Cardiac septum (tissue), 1 donor: ENCODE measurements at regions of chr16 and their contacts with region 1.

Region 1: DNA sequence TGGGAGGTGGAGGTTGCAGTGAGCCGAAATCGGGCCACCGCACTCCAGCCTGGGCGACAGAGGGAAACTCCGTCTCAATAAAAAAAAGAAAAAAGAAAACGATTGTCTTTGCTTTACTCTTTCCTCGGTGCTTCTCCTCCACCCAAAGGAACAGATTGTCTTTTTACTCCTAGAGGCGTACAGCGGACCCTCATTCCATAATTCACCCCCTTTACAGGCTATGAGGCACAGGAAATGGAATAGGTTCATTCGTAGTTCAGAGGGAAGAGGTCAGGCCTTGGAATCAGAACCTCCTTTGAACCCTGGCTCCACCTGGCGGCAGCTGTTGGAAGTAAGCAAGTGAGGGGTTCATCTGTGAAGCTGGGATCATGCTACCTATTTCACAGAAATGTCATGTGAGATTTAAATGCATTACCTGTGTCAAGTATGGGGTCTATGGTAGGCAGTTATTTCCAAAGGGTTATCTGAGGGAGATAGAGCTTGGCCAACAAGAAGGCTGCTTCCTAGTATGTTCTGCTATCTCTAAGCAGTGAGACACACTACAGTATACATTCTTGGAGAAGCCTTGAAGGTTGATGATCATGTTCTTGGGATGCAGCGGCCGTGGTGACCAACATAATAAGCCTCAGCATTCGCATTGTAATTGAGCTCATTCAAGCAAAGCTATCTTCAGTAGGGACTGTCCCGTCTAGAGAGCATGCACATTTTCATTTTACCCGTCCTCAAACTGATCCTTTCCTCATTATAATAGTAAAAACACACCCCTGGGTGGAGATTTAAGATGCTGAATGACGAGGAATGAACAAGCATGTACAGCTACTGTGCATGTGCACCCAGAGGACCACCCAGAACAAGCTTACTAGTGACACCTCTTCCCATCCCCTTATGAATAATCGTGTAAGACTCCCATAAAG is 18.7 kb upstream of the ZNF689 start:
- DNase-seq: peak; percentile 93

Region 2: DNA sequence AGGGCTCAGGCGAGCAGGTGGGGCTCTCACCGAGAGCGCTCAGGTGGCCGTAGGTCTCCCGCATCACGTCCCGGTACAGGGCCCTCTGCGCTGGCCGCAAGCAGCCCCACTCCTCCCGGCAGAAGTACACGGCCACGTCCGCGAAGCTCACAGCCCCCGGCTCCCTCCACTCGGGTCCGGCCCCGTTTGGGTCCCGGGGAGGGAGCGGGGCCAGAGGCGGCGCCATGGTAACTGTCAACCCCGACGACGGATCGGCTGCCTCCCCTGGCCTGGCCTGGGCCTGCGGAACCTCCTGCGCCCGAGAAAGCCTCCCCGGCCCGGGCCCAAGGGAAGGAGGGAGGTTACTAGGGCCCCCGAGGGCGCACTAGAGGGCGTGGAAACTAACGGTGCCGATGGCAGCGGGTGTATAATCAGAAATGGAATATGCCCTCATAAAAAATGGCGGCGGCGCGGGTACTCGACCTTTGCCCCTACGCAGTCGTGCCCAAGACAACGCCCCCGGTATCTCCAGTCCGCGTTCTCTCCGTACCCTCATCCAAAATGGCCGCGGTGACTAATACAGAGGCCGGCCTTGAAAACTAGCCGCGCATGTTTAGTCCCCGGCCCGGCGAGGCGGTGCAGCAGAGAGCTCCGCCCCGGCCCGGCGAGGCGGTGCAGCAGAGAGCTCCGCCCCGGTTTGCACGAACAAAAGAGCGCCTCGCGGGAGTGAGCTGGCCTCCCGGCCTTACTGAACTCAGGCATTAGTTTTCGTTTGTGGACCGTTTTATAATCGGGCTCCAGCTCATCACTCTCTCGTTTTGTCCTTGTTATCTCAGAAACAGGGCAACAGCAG is 70.7 kb before region 1 on chr16 and contains the start of gene ZNF764:
- intact Hi-C with region 1: loop called (anchors 2 kb)
- DNase-seq: peak; percentile 100
- total RNA-seq, gene ZNF764: 11.4 TPM

Region 3: DNA sequence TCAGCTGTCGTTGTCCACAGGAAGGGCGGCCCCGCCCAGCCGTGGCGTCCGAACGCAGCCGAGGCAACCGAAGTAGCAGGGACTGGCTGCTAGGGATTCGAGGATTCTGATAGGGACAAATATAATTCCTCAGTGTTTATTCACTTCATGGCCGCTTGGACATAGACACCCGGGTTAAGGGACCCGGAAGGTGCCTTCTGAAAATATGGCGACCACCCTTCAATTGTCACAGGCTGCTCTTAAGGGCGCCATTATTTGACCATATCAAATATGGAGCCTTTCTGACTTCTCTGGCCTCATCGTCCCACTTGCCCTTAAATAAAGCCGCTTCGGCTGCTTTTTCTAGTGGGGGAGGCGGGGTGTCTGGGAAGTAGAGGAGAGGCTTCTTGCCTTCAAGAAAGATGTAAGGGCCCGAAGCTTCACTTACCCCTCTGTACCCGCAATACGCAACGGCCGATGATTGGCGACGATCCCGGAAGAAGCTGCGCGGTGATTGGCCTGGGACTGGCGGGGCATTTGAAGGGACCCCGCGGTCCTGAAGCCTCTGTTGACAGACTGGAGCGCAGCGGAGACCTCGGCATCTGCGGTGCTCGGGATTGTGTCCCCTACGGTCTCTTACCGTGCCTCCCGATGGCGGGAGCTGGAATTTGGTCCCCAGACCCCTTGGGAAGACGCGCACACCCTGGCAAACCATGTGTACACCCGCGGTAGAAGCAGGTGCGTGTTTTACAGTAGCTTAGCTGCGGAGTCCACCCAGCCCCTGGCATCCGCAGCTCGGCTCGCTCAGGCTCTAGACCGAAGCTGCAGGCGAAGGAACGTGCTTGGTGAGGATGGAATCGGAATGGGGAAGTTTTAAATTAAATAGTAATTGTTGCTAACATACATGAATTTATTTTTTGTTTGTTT is 56.9 kb before region 1 on chr16 and contains the start of gene ZNF688:
- intact Hi-C with region 1: loop called (anchors 5 kb)
- DNase-seq: peak; percentile 96
- total RNA-seq, gene ZNF688: 12.1 TPM

Region 4: DNA sequence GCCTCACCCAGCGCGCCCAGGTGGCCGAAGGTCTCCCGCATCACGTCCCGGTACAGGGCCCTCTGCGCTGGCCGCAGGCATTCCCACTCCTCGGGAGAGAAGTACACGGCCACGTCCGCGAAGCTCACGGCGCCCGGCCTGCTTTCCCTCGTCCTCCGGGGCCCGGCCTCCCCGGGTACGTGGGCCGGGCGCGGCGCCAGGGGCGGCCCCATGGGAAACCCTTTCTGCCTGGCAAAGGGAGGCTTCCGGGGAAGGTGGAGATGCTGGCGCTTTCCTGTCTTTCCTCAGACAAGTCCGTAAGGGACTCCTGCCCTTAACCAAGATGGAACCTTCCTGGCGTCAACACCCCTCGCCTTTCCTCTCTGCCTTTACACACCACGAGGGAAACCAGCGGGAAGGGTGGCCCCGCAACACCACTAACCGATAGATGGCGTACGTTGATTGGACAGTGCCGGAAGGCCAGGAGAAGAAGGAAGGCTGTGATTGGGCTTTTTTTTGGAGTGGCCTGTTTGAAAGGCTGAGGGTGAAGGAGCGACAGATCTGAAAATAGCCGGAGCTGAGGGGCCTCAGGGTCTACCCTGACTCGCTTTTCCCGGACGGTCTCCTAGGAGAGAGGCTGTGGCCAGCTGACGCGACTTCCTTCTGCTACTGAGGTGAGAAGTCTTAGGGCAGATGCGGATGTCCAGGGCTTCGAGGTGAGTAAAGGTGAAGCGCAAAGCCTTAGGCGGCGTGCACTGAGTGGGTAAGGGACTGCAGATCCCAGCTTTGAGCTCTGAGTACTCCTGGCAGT is 43.3 kb before region 1 on chr16 and contains the start of gene ZNF785:
- intact Hi-C with region 1: loop called (anchors 2 kb)
- DNase-seq: peak; percentile 98
- total RNA-seq, gene ZNF785: 6.7 TPM

Region 5: DNA sequence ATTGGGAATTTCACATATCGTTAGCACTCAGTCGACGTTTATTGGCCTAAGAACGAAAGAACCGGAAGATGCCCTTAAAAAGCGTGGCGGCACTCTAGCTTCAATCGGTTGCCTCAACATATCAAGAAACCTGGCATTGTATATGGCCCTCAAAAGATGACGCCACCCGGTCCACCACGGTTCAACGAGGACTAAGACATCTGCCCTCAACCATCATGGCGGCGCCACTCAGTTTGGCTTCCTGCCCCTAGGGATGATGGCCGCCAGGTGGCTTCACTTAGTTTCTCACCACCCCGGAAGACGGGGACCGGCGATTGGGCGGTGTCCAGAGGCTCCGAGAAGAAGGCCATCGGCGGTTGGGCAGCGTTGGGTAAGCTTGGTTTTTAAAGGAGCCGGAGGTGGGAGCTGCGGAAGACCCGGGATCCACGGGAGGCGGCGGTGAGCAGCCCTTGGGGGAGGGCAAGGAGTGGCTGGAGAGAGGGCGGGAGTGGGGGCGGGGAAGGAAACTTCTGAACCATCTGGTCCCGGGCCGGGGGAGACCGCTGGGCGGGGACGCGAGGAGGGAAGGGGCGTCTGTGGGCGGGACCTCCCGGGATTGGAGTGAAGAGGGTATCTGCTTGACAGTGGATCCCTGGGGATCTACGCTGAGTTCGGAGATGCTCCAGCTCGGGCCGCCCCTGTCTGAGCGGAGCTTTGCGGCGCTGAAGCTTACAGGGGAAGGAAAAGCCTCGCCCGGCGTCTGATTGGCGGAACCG is 21.7 kb after region 1 on chr16 and contains the start of gene PRR14:
- intact Hi-C with region 1: loop called (anchors 1 kb)
- DNase-seq: peak; percentile 100
- total RNA-seq, gene PRR14: 21.1 TPM

Region 6: DNA sequence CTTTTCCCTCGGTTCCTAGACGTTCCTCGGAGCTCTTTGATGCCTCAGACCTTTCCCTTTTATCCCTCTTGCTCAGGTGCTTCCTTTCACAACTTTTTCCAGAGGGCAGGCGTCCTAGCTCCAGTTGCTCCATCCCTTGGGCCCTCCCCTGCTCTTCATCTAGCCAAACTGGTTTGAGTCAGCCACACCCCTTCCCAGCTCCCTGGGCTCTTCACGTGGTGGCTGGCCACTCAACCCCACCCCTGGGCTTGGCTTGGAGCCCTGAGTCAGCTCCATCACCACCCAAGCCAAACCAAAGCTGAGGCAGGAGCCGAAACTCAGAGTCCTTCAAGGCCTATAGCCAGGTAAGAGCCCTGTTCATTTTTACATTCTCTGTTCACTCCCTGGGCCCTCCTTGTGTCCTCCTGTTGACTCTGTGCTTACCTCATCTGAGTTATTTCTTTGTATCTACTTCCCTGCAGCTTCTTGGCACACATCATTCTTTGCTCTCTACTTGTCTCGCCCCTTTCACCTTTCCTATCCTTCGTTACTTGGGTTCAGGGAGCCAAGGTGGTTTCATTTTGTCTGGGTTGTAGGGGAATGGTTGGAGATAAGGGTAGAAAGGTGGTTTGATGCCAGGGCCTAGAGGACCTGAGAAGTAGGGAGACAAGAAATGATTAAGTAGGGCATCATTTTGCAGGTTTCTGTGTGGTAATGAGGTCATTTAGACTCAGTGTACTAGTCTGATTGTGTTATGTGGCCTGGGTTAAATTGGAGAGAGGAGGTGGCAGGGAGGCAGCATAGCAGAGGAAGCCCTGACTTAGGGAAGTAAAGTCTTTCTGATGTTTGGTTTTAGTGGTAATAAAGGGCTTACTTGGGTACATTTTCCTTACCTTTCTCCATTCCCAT is 111.7 kb after region 1 on chr16:
- intact Hi-C with region 1: no loop called
- DNase-seq: peak; percentile 89